T-cell (primary cell): ENCODE measurements at regions of chr2 and their contacts with region 1.

Region 1: GRCh38 chr2:112666764-112667122 is 21.0 kb downstream of the SLC20A1 start:
- DNase-seq: no peak
- ATAC-seq: no peak
- H3K4me3 ChIP-seq: no peak overlapping the region
- H3K4me3 Mint-ChIP-seq: no peak overlapping the region
- H3K27ac ChIP-seq: no peak overlapping the region
- H3K27ac Mint-ChIP-seq: peak overlapping the region in 1 of 2 donors; percentile 28
- H3K4me1 ChIP-seq: no peaks in the 10 kb centered on the region
- H3K4me1 Mint-ChIP-seq: peaks cover 7 to 13% (median 8%) of the 10 kb centered on the region in 3 donors
- H3K27me3 ChIP-seq: no peaks in the 10 kb centered on the region
- H3K27me3 Mint-ChIP-seq: no peaks in the 10 kb centered on the region

Region 2: GRCh38 chr2:113324684-113325160 is 658.0 kb after region 1 on chr2:
- CTCF ChIA-PET with region 1: no interaction called
- POLR2A ChIA-PET with region 1: interaction called in 1 of 2 experiments, 23 read pairs
- DNase-seq: peak in 30 of 35 experiments; percentile 5 to 56 (median 21)
- ATAC-seq: peak; percentile 79 to 86 (median 82)
- H3K4me3 ChIP-seq: peak overlapping the region in 1 of 2 donors; percentile 23
- H3K4me3 Mint-ChIP-seq: peak overlapping the region; percentile 53 to 85 (median 62)
- H3K27ac ChIP-seq: no peak overlapping the region
- H3K27ac Mint-ChIP-seq: peak overlapping the region in 1 of 2 donors; percentile 13
- H3K4me1 ChIP-seq: peaks cover 0 to 13% of the 10 kb centered on the region in 2 experiments
- H3K4me1 Mint-ChIP-seq: peaks cover 12 to 17% (median 13%) of the 10 kb centered on the region in 3 donors
- H3K27me3 ChIP-seq: peaks cover 0 to 19% of the 10 kb centered on the region in 2 experiments
- H3K27me3 Mint-ChIP-seq: peaks cover 9 to 17% of the 10 kb centered on the region in 2 donors